ENCODE measurements at regions of chr22 and their contacts with region 1.

Region 1: GRCh38 chr22:33209930-33210784 is 152.0 kb upstream of the SYN3 start:
- DNase-seq: no peak
- ATAC-seq: peak; percentile 22
- H3K4me3 ChIP-seq: no peak overlapping the region
- H3K27ac ChIP-seq: no peak overlapping the region
- H3K4me1 ChIP-seq: no peaks in the 10 kb centered on the region
- H3K27me3 ChIP-seq: no peaks in the 10 kb centered on the region

Region 2: GRCh38 chr22:33028234-33028633 is 181.9 kb before region 1 on chr22:
- intact Hi-C with region 1: loop called in 1 of 2 experiments (anchors 10 kb)
- DNase-seq: no peak
- ATAC-seq: no peak
- H3K4me3 ChIP-seq: no peak overlapping the region
- H3K27ac ChIP-seq: no peak overlapping the region
- H3K4me1 ChIP-seq: no peaks in the 10 kb centered on the region
- H3K27me3 ChIP-seq: peaks cover 0 to 2% of the 10 kb centered on the region in 2 donors

Region 3: DNA sequence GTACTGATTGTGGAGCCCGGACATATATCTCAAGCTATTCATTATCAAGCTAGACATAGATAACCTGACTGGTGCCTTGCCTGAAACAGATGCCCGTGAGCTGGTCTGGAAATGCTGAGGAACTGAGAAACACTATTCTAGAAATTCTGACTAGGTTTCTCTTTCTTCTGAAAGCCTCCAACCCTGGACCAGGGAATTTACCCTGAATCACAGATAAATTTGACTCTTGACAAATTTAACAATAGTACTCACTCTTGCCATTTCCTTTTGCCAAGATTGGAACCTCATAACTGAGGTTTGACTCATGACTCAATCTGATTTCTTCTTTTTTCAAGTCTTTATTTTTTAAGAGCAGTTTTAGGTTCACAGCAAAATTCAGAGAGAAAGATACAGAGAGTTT is 37.6 kb after region 1 on chr22:
- intact Hi-C with region 1: no loop called
- DNase-seq: no peak
- ATAC-seq: no peak
- H3K4me3 ChIP-seq: no peak overlapping the region
- H3K27ac ChIP-seq: no peak overlapping the region
- H3K4me1 ChIP-seq: no peaks in the 10 kb centered on the region
- H3K27me3 ChIP-seq: no peaks in the 10 kb centered on the region

Measured in aorta (tissue), 5 donors.